ENCODE measurements at regions of chr14 and their contacts with region 1.

Region 1: GRCh38 chr14:106308839-106309389 is 782.5 kb downstream of the TMEM121 start:
- DNase-seq: peak; percentile 87
- H3K4me3 Mint-ChIP-seq: peak overlapping the region; percentile 30
- H3K27ac Mint-ChIP-seq: peak overlapping the region; percentile 80
- H3K4me1 Mint-ChIP-seq: no peaks in the 10 kb centered on the region
- H3K27me3 Mint-ChIP-seq: peaks cover 34% of the 10 kb centered on the region

Region 2: DNA sequence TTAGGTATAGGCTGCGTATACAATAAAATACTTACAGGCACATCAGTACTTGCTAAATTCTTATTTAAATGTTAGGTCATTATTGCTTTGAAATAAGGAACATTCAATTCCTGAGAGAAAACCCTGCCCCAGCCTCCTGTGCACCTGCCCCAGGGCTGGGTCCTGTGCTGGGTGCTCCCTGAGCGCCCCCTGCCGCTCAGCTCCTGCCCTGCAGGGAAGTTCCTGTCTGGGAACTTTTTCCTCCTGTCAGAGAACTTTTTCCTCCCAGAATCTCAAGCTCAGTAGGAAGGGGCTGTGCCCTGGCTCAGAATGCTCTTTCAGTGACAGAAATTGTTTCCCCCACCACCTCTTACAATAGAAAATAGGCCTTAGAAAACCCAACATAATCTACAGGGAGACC is 31.4 kb before region 1 on chr14:
- CTCF ChIA-PET with region 1: interaction called, 27 read pairs
- DNase-seq: peak; percentile 34
- H3K4me3 Mint-ChIP-seq: no peak overlapping the region
- H3K27ac Mint-ChIP-seq: no peak overlapping the region
- H3K4me1 Mint-ChIP-seq: peaks cover 9% of the 10 kb centered on the region
- H3K27me3 Mint-ChIP-seq: peaks cover 52% of the 10 kb centered on the region

Region 3: DNA sequence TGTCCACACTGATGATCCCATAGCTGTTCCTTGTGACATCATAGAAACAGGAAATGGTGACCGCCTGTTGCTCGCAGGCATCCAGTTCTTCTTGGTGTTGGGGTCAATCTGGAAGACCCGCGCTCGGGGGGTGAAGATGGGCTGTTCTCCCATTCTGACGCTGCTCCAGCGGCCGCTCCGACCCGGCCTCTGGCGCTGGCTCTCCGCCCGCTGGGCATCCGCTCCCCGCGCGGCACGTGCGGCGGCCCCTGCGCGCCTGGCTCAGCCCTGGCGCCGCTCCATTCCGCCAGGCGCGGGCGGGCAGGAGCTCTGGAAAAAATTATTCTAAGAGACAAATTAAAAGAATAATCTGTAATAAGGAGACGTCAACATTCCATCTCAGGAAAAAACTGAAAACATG is 21.4 kb before region 1 on chr14:
- CTCF ChIA-PET with region 1: interaction called, 50 read pairs
- DNase-seq: no peak
- H3K4me3 Mint-ChIP-seq: no peak overlapping the region
- H3K27ac Mint-ChIP-seq: no peak overlapping the region
- H3K4me1 Mint-ChIP-seq: no peaks in the 10 kb centered on the region
- H3K27me3 Mint-ChIP-seq: peaks cover 35% of the 10 kb centered on the region

Region 4: GRCh38 chr14:106294324-106294723 is 14.6 kb before region 1 on chr14:
- CTCF ChIA-PET with region 1: interaction called, 50 read pairs
- DNase-seq: no peak
- H3K4me3 Mint-ChIP-seq: no peak overlapping the region
- H3K27ac Mint-ChIP-seq: no peak overlapping the region
- H3K4me1 Mint-ChIP-seq: peaks cover 2% of the 10 kb centered on the region
- H3K27me3 Mint-ChIP-seq: peaks cover 33% of the 10 kb centered on the region

Region 5: GRCh38 chr14:106372870-106373652 is 64.1 kb after region 1 on chr14:
- CTCF ChIA-PET with region 1: interaction called, 33 read pairs
- DNase-seq: peak; percentile 87
- H3K4me3 Mint-ChIP-seq: no peak overlapping the region
- H3K27ac Mint-ChIP-seq: peak overlapping the region; percentile 8
- H3K4me1 Mint-ChIP-seq: peaks cover 24% of the 10 kb centered on the region
- H3K27me3 Mint-ChIP-seq: peaks cover 26% of the 10 kb centered on the region

Measured in activated naive CD4-positive, alpha-beta T cell treated with anti-CD3 and anti-CD28 coated beads, Interleukin-2, amount 10 ng/mL, durations not matched to agents 7 days and 5 days (primary cell).